Dendritic cell treated with granulocyte-macrophage colony-stimulating factor and Interleukin-4, amounts not matched to agents 40 ng/mL and 50 ng/mL, for 4 days (primary cell): ENCODE measurements at regions of chr22 and their contacts with region 1.

Region 1: GRCh38 chr22:23970816-23971486 is 3.3 kb downstream of the DDT start:
- H3K4me3 Mint-ChIP-seq: no peak overlapping the region
- H3K27ac Mint-ChIP-seq: no peak overlapping the region
- H3K4me1 Mint-ChIP-seq: peaks cover 33% of the 10 kb centered on the region
- H3K27me3 Mint-ChIP-seq: no peaks in the 10 kb centered on the region

Region 2: DNA sequence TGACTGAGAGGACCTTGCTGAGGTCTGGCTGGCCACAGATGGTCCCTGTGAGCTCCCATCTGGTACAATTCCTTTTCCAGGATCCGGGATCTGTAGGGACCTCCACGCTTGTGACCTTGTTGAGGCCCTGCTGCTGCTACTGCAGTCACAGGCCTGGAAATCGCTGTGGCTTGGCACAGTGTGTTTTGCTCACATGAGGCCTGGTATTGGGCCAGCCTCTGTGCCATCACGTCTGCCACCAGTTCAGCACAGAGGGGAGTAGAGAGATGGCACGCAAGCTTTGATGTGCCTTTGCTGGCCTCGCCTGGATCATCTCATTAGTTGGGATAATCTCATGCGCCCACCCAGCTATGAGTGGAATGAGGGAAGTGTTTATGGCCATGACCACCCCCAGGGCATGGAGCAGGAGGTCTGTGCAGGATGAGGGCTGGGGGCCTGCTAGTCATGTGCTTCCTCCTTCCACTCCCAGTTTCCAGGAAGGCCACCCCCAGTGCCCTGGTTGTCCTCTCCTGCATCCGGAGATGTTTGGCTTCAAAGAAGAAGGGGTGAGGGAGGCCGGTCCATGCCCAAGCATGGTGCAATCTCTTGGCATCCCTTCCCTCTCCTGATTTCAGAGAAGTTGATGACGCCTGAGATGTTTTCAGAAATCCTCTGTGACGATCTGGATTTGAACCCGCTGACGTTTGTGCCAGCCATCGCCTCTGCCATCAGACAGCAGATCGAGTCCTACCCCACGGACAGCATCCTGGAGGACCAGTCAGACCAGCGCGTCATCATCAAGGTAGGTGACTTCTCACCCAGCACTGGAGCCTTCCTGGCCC is 154.6 kb before region 1 on chr22:
- intact Hi-C with region 1: no loop called
- H3K4me3 Mint-ChIP-seq: no peak overlapping the region
- H3K27ac Mint-ChIP-seq: no peak overlapping the region
- H3K4me1 Mint-ChIP-seq: peaks cover 13% of the 10 kb centered on the region
- H3K27me3 Mint-ChIP-seq: no peaks in the 10 kb centered on the region

Region 3: GRCh38 chr22:23857606-23858483 is 113.1 kb before region 1 on chr22 and contains the start of gene SLC2A11:
- intact Hi-C with region 1: no loop called
- H3K4me3 Mint-ChIP-seq: peak within 1 kb of the TSS; percentile 91
- H3K27ac Mint-ChIP-seq: peak within 1 kb of the TSS; percentile 87
- H3K4me1 Mint-ChIP-seq: peaks cover 17% of the 10 kb centered on the region
- H3K27me3 Mint-ChIP-seq: peaks cover 2% of the 10 kb centered on the region

Region 4: DNA sequence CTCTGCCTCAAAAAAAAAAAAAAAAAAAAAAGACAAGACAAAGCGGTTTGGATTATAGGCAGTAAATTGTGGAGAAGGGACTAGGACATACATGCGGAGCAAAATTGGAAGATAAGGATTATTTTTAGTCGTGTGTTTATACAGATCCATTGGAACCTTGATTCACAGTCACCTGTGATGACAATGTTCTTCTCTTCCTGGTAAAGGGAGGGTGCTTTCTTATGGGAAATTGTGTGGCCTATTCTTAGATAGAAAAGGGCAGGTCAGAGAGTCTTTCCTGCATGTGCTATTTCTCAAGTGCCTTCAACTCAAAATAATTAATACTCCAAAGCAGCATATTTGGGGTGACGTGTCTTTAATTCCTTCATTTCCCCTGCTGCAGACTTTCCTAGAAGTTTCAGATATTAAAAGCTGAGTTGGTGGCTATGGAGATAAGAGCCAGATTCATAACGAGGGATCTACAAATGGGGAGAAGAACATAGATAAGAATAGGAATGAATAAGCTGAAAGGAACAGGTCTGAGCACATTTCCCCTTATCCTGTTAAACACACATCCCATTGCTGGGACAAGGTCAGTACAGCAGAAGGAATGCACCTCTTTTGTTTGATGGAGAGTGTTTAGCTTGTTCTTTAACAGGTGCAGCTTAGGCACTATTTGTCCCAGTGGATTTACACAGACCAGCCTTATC is 32.5 kb before region 1 on chr22:
- intact Hi-C with region 1: loop called (anchors 5 kb)
- H3K4me3 Mint-ChIP-seq: no peak overlapping the region
- H3K27ac Mint-ChIP-seq: no peak overlapping the region
- H3K4me1 Mint-ChIP-seq: no peaks in the 10 kb centered on the region
- H3K27me3 Mint-ChIP-seq: peaks cover 6% of the 10 kb centered on the region